ENCODE measurements at regions of chr1 and their contacts with region 1.

Region 1: DNA sequence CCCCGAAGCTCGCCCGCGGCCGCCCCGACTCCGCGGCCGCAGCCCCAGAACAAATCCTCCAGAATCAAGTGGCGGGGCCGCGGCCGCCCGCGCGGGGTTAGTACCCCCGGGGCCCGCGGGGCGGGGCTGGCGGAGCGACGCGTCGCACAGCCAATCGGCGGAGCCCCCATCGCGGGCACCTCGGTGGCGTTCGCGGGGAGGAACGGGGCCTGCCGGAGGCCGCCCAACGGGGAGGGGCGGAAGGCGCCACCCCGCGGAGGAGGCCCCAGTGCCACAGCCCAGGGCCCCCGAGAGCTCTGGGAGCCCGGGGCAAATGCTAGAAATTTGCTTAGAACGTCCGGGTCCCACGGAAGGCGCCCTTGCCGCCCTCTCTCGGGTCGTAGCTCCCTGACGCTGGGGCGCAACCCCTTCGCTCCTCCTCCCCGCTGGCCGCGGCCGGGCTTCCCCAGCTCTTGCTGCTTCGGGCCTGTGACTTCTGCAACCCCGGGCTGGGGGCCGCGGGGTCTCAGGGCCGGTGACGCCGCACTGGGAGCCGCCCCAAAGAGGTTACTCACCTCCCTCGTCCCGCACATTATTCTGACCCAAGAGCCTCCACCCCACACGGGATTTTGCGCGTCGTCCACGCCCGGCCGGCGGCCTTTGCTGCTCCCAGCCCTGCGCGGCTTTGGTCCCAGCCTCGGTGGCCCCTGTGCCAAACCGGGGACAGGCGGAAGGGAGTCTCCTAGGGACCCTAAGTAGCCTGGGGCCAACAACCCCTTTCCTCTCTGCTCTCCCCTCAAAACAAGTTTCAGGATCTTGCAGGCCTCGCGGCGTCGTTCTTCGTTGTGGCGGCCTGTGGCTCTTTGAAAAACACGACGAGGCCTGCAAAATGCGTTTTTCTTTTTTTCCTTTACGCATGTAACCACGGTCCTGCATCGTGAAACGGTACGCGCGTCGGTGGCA is at the start of gene RUNX3:
- DNase-seq: peak in 2 of 4 donors; percentile 86 to 94
- ATAC-seq: peak; percentile 69
- H3K4me3 ChIP-seq: peak within 1 kb of the TSS; percentile 17 to 57
- H3K27ac ChIP-seq: peak within 1 kb of the TSS; percentile 56 to 81
- H3K4me1 ChIP-seq: peaks cover 9 to 65% of the 10 kb centered on the region in 2 donors
- H3K27me3 ChIP-seq: peaks cover 90 to 99% of the 10 kb centered on the region in 2 donors
- CTCF ChIP-seq: peak in 1 of 2 donors; percentile 13
- polyA plus RNA-seq, gene RUNX3: 0.98 to 1.6 (median 1.3) TPM

Region 2: DNA sequence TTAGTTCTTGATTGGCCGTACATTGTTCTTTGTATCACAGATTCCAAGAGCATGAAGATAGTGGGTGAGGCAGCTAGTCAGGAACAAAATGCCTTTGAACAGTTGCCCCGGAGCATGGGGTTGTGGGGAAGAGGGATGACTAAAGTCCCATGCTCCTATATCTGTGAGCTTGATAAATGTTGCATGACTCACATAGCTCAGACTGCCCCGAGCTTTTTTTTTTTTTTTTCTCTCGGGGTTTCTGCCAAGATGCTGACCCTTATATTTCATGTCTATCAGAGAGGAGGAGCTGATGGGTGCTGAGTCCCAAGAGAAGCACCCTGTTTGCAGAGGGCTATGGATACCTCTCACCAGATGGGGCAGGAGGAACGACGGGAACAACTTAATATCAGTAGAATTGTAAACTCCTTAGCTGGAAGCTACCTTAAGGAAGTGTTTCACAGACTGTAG is 246.7 kb before region 1 on chr1:
- intact Hi-C with region 1: no loop called
- DNase-seq: no peak
- ATAC-seq: peak; percentile 76
- H3K4me3 ChIP-seq: no peak overlapping the region
- H3K27ac ChIP-seq: no peak overlapping the region
- H3K4me1 ChIP-seq: peaks cover 5 to 10% of the 10 kb centered on the region in 2 donors
- H3K27me3 ChIP-seq: no peaks in the 10 kb centered on the region
- CTCF ChIP-seq: no peak

Region 3: GRCh38 chr1:25037174-25038074 is 106.9 kb after region 1 on chr1:
- intact Hi-C with region 1: loop called in 1 of 2 experiments (anchors 10 kb)
- DNase-seq: peak in 1 of 4 donors; percentile 81
- ATAC-seq: peak; percentile 59
- H3K4me3 ChIP-seq: no peak overlapping the region
- H3K27ac ChIP-seq: no peak overlapping the region
- H3K4me1 ChIP-seq: peaks cover 2 to 33% of the 10 kb centered on the region in 2 donors
- H3K27me3 ChIP-seq: peaks cover 0 to 25% of the 10 kb centered on the region in 2 donors
- CTCF ChIP-seq: peak; percentile 5 to 83

Region 4: GRCh38 chr1:25099343-25099951 is 169.0 kb after region 1 on chr1:
- intact Hi-C with region 1: loop called in 1 of 2 experiments (anchors 10 kb)
- DNase-seq: no peak
- ATAC-seq: no peak
- H3K4me3 ChIP-seq: no peak overlapping the region
- H3K27ac ChIP-seq: no peak overlapping the region
- H3K4me1 ChIP-seq: peaks cover 0 to 27% of the 10 kb centered on the region in 2 donors
- H3K27me3 ChIP-seq: peaks cover 0 to 13% of the 10 kb centered on the region in 2 donors
- CTCF ChIP-seq: no peak